Body of pancreas (tissue), 4 donors: ENCODE measurements at regions of chr1 and their contacts with region 1.

Region 1: DNA sequence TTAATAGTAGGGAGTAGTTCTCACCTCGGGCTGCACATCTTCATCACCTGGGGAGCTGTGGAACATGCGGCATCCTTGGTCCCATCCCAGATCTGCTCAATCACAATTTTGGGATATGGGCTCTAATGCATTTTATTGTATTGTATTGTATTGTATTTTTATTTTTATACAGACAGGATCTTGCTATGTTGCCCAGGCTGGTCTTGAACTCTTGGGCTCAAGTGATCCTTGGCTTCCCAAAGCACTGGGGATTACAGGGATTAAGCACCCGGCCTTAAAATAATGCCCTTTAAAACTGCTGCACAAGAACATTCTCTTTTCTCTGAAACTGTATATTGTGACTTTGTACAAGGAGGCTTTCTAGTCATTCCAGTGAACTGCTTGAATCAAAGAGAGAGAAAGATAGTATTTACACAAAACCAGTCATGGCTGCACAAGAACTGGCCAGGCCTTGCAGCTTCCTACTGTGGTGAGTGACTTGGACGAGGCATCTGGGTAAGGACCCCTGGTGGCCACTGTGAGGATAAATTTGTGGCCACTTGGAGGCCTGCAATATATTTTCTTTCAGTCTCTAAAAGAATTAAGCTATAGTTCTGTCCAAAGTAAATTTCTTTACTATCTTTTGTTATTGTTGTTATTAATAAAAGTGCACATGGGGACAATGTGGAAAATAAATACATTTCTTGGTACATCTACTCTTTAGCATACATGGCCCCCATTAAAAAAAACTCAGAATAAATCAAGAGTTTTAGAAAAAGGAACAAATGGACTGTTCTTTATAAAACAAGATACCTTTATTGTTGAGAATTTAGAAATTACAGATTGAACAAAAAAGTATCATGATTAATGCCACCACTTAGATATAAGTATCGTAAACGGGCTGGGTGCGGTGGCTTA is 48.0 kb downstream of the TBCE start:
- DNase-seq: peak; percentile 71 to 80 (median 76)
- ATAC-seq: peak; percentile 76
- H3K4me3 ChIP-seq: no peak overlapping the region
- H3K27ac ChIP-seq: no peak overlapping the region
- H3K4me1 ChIP-seq: no peaks in the 10 kb centered on the region
- H3K27me3 ChIP-seq: no peaks in the 10 kb centered on the region
- CTCF ChIP-seq: peak; percentile 62 to 81 (median 72)
- POLR2A ChIP-seq: no peak

Region 2: DNA sequence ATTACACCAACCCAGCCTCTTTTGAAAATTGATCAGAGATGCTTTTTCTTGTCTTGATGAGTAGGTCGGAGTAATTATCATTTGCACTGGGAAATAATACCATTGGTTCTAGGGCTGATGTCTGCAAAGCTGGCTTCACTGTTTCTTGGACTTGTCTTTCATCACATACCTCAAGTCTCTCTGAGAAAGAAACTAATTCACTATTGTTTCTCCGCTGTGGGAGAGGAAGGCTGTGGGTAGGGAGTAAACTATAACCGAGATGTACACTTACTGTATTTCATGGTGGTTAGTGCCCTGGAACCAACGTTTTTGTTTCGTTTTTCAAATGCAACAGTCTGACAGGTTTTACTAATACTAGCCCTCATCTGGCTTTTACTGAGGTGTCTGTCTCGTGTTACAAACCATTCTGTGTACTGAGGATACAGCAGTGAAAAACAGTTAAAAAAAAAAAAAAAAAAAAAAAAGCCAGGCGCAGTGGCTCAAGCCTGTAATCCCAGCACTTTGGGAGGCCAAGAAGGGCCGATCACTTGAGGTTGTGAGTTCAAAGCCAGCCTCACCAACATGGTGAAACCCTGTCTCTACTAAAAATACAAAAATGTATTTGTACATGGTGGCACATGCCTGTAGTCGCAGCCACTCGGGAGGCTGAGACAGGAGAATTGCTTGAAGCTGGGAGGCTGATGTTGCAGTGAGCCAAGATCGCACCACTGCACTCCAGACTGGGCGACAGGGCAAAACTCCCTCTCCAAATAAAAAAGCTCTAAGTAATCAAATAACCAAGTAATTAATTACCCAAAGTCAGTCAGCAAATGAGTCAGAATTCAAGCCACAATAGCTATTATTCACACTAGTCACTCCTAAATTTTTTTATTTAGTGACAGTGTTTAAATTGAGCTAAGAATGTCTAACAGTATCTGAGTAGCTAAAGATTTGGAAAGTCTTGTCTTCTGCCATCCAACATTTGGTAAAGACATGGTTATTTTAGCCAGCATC is 309.9 kb before region 1 on chr1:
- intact Hi-C with region 1: loop called (anchors 10 kb)
- DNase-seq: no peak
- ATAC-seq: no peak
- H3K4me3 ChIP-seq: no peak overlapping the region
- H3K27ac ChIP-seq: peak overlapping the region in 1 of 4 donors; percentile 31
- H3K4me1 ChIP-seq: peaks cover 14% of the 10 kb centered on the region
- H3K27me3 ChIP-seq: no peaks in the 10 kb centered on the region
- CTCF ChIP-seq: no peak
- POLR2A ChIP-seq: no peak

Region 3: DNA sequence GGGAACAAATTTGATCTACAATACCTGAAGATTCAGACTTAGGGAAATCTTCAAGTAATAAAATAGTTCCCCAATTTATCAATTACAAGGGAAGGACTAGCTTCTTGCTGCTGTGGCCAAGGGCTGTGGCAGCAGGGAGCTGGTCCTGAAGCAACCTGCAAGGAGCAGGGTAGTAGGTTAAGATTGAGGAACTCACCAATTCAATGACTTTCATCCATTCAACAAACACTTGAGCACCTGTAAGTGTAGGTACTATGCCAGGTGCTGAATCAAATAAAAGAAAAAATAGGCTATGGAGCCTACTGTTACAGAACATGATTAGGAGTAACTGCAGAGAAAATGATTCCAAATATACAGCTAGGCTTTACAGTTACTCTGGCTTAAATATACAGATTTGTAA is 190.0 kb before region 1 on chr1:
- intact Hi-C with region 1: no loop called
- DNase-seq: no peak
- ATAC-seq: no peak
- H3K4me3 ChIP-seq: no peak overlapping the region
- H3K27ac ChIP-seq: no peak overlapping the region
- H3K4me1 ChIP-seq: no peaks in the 10 kb centered on the region
- H3K27me3 ChIP-seq: no peaks in the 10 kb centered on the region
- CTCF ChIP-seq: no peak
- POLR2A ChIP-seq: no peak

Region 4: DNA sequence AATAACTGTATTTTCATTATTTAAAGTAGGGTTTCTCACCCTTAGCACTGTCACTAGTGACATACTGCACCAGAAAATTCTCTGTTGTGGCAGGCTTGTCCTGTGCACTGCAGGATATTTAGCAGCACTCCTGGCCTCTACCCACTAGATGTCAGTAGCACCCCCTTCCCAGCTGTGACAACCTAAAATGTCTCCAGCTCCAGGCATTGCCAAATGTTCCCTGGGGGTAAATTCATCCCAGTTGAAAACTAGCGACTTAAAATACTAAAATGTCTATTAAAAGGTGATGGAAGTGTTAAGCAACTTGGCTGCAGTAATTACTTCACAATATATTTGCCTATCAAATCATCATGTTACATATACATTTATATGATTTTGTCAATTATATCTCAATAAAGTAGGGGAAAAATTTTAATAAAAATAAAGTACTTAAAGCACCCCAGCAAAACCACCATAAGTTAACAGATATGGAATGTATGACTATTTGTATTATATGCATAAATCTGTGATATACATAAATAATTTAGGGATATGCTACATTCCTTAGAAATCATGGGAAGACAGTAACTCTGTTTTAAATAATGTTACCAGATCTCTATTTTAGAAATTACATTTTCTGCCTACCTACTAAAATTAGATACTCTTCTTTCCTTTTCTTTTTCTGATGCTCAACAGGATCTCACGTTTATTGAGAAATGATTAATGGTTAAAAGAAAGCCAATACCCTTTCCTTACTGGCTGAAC is 161.9 kb before region 1 on chr1:
- intact Hi-C with region 1: loop called (anchors 10 kb)
- DNase-seq: peak; percentile 64 to 76 (median 70)
- ATAC-seq: peak; percentile 92
- H3K4me3 ChIP-seq: no peak overlapping the region
- H3K27ac ChIP-seq: no peak overlapping the region
- H3K4me1 ChIP-seq: peaks cover 15% of the 10 kb centered on the region
- H3K27me3 ChIP-seq: no peaks in the 10 kb centered on the region
- CTCF ChIP-seq: peak; percentile 66 to 87 (median 84)
- POLR2A ChIP-seq: no peak

Region 5: GRCh38 chr1:235486321-235486720 is 71.1 kb after region 1 on chr1:
- intact Hi-C with region 1: no loop called
- DNase-seq: no peak
- ATAC-seq: no peak
- H3K4me3 ChIP-seq: no peak overlapping the region
- H3K27ac ChIP-seq: no peak overlapping the region
- H3K4me1 ChIP-seq: peaks cover 13% of the 10 kb centered on the region
- H3K27me3 ChIP-seq: no peaks in the 10 kb centered on the region
- CTCF ChIP-seq: no peak
- POLR2A ChIP-seq: no peak